ENCODE measurements at regions of chr1 and their contacts with region 1.

Region 1: DNA sequence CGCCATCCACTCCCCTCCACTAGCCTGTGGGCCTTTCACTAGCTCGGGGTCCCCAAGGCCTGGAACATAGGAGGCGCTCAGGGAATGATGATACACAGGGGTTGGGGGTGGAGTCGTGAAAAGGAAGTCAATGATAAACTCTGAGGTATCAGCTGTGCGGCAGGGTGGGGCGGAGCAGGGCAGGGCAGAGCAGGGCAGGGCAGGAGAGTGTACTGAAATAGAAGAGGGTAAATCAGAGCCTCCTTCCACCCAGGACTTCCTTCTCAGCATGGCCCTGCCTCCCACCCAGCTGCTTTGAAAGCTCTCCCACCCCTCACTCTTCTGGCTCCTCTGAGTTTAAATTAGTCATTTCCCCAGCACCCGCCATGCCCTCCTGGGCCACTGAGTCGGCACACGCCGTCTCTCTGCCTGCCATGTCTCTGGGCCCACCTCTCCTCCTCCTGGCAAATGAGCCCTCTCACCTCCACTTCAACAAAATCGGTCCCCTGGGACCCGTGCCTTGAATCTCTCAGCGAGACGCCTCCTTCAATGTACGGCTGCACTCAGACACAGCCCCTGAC is 16.9 kb downstream of the CAPZB start:
- DNase-seq: peak; percentile 87
- H3K4me3 Mint-ChIP-seq: peak overlapping the region; percentile 37
- H3K27ac Mint-ChIP-seq: peak overlapping the region; percentile 88
- H3K4me1 Mint-ChIP-seq: peaks cover 89% of the 10 kb centered on the region
- H3K27me3 Mint-ChIP-seq: no peaks in the 10 kb centered on the region

Region 2: DNA sequence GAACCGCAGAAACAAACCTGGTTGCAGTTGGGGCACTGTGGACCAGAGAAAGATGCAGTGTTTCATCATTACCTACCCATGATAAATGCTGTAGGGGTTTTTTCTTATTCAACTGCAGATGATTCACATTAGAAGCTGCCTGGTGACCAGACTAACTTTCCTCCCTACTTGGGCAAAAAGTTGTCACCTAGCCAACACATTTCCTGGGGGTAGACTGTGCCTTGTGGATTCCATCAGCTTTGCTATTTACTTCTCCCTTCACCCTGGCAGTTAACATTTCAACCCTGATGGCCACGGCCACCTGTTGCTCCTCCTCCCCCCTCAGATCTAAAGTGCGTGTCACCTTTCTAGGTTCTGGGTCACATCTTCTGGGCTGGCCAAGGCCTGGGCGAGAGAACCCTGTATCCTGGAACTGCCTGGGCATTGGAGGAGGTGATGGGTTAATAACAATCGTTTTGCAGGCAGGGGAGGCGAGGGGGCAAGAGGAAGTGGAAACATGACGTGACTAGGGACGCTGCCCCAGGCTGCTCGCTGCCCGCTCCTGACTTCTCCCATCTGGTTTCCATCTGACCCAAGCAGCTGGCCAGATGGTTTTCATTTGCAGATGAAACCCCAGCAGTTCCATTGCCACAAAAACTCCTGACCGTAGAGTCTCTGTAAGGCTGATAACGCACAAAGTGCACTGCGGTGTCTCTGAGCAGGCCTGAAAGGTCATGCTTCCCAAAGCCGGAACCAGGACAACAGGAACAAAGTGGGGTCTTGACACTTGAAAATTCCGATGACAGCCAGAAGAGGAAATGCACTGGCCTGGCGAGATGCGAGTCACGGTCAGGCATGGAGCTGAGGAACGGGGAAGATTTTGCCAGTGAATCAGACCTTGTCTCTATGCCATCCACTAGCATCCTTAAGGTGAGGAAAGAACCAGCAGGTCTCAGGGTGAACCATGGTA is 19.7 kb before region 1 on chr1:
- CTCF ChIA-PET with region 1: interaction called, 6 read pairs
- intact Hi-C with region 1: loop called (anchors 1 kb)
- DNase-seq: peak; percentile 74
- H3K4me3 Mint-ChIP-seq: peak overlapping the region; percentile 17
- H3K27ac Mint-ChIP-seq: peak overlapping the region; percentile 90
- H3K4me1 Mint-ChIP-seq: peaks cover 91% of the 10 kb centered on the region
- H3K27me3 Mint-ChIP-seq: no peaks in the 10 kb centered on the region